Right ventricle myocardium superior (tissue), 1 donor: ENCODE measurements at regions of chr9 and their contacts with region 1.

Region 1: DNA sequence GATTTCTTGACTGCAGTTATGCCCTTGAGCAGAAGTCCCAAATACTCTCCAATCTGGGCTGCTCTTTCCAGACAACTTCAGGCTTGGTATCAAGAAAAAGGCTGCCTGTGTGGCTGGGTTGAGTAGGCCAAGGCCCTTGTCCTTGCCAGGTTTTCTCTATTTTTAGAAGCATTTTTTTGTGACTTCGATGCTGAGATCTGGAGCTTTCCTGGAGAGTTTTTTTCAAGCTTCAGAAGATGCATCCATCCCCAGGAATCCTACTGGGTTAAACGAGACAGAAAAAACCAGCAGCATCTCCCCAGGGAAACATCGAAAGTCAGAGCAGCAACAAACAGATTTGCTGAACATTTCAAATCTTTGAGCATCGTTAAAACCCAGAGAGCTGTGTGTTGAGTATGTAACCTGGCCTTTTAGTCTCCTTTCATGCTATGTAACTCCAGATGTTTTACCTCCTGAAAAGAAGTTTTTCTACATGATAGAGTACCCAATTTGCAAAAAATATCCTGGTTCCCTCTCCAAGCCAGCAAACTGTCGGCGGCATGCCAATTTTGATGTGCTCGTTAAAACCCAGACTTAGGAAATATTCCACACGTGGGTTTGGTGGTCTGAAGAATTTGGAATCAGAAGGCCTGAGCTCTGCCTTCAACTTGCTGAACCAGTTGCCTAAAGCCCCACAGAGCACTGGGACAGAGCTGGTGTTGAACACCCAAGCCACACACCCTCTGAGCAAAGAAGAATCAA is 98.1 kb upstream of the ALDH1B1 start:
- DNase-seq: no peak
- ATAC-seq: no peak

Region 2: GRCh38 chr9:38195737-38196161 is 98.6 kb before region 1 on chr9:
- intact Hi-C with region 1: no loop called
- DNase-seq: no peak
- ATAC-seq: no peak

Region 3: GRCh38 chr9:38214432-38214831 is 80.0 kb before region 1 on chr9:
- intact Hi-C with region 1: loop called (anchors 10 kb)
- DNase-seq: no peak
- ATAC-seq: no peak

Region 4: DNA sequence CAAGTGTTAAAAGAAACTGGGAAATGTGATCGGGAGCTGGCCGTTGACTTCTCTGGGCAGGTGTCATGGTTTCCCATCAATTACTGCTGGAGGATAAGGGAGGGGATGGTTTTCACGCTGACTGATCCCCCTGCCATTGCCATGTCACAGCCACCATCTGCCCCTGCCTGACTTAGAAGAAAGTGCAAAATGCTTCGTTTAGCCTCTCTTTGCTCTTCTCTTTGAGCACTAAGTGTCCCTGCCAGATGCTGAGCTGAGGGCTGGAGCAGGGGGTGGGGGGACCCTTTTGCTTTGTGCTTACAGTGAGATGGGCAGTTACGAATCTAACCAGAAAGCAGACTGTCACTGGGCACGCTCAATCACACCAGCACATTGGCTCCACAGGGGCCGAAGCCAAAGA is 40.2 kb before region 1 on chr9:
- intact Hi-C with region 1: no loop called
- DNase-seq: no peak
- ATAC-seq: no peak

Region 5: GRCh38 chr9:38732885-38733284 is 438.5 kb after region 1 on chr9:
- intact Hi-C with region 1: no loop called
- DNase-seq: no peak
- ATAC-seq: no peak